ENCODE measurements at regions of chr3 and their contacts with region 1.

Region 1: DNA sequence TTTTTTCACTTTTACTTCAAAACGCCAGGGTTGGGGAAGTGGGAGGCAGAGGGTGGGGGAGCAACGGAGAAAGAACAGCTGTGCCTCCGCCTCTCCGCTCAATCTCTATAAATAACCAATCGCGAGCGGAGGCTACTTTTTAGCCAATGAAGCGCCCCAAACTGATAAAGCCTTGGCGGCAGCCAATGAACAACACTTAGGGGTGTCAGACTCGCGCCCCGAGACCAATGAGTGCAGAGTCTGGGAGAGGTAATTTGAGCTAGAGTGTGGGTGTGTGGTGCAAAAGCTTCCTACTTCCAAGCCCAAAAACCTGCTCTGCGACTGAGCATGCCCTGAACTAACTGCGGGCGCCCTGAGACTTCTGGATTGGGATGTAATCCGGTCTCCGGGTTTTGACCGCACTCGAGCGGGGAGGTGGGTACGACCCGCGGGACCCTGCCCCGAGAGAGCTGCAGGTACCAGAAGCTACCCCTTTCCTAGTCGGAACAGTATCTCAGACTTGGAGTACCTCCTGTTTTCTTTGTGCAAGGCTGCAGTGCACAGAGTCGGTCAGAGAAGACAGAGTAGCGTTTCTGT is 800 bp upstream of the RAP2B start:
- DNase-seq: peak; percentile 99
- H3K4me3 ChIP-seq: peak overlapping the region; percentile 88 to 100 (median 94)
- H3K27ac ChIP-seq: peak overlapping the region; percentile 84
- H3K4me1 ChIP-seq: peaks cover 18% of the 10 kb centered on the region
- H3K27me3 ChIP-seq: no peaks in the 10 kb centered on the region
- CTCF ChIP-seq: no peak
- POLR2A ChIP-seq: no peak

Region 2: DNA sequence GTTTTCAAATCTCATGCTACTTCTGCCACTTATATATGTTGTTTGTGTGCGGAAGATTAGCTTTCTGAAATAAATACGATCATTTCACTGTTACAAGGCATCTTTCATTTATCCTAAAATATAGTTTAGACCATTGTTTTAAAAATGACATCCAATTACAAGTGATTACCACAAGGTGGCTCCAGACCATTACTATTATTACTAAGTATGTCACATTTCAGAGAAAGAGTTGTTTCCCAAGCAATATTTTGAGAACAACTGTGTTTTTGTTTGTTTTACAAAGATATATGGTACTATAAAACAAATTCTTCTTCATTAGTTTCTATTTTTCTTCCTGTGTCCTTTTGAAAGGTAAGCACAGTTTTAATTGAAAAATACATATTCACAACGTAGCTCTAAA is 135.2 kb before region 1 on chr3:
- CTCF ChIA-PET with region 1: interaction called, 6 read pairs
- POLR2A ChIA-PET with region 1: no interaction called
- dilution Hi-C with region 1: no loop called
- intact Hi-C with region 1: loop called (anchors 1 kb)
- DNase-seq: peak; percentile 53
- H3K4me3 ChIP-seq: no peak overlapping the region
- H3K27ac ChIP-seq: no peak overlapping the region
- H3K4me1 ChIP-seq: peaks cover 8% of the 10 kb centered on the region
- H3K27me3 ChIP-seq: peaks cover 0 to 6% of the 10 kb centered on the region in 2 experiments
- CTCF ChIP-seq: peak; percentile 28 to 35
- POLR2A ChIP-seq: no peak

Region 3: GRCh38 chr3:153138276-153139210 is 22.7 kb before region 1 on chr3:
- CTCF ChIA-PET with region 1: interaction called, 17 read pairs
- POLR2A ChIA-PET with region 1: interaction called, 3 read pairs
- dilution Hi-C with region 1: no loop called
- intact Hi-C with region 1: loop called (anchors 1 kb)
- DNase-seq: peak; percentile 97
- H3K4me3 ChIP-seq: no peak overlapping the region
- H3K27ac ChIP-seq: peak overlapping the region; percentile 97
- H3K4me1 ChIP-seq: peaks cover 30% of the 10 kb centered on the region
- H3K27me3 ChIP-seq: no peaks in the 10 kb centered on the region
- CTCF ChIP-seq: no peak
- POLR2A ChIP-seq: peak; percentile 49

Region 4: GRCh38 chr3:153252963-153253362 is 91.7 kb after region 1 on chr3:
- CTCF ChIA-PET with region 1: interaction called, 3 read pairs
- POLR2A ChIA-PET with region 1: no interaction called
- dilution Hi-C with region 1: no loop called
- intact Hi-C with region 1: loop called (anchors 1 kb)
- DNase-seq: no peak
- H3K4me3 ChIP-seq: no peak overlapping the region
- H3K27ac ChIP-seq: no peak overlapping the region
- H3K4me1 ChIP-seq: peaks cover 21% of the 10 kb centered on the region
- H3K27me3 ChIP-seq: no peaks in the 10 kb centered on the region
- CTCF ChIP-seq: no peak
- POLR2A ChIP-seq: no peak

Region 5: DNA sequence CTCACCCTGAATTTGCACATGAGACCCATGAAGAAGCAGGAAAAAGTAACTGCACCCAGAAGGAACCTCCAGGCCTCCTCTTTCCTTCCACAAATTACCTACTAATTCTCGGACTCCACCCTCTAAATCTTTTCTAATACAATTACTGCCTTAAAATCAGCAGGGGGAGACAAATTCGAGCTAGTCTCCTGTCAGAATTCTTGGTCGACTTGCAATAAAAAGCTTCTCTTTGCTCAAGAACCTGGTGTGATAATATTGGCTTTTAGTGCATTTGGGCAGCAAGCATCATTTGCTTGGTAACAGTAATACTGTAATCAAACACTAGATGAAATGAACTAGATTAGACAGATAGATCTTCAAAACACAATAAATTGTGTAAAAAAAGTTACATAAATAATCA is 282.7 kb after region 1 on chr3:
- CTCF ChIA-PET with region 1: interaction called, 6 read pairs
- POLR2A ChIA-PET with region 1: no interaction called
- dilution Hi-C with region 1: no loop called
- intact Hi-C with region 1: loop called (anchors 2 kb)
- DNase-seq: peak; percentile 18
- H3K4me3 ChIP-seq: no peak overlapping the region
- H3K27ac ChIP-seq: no peak overlapping the region
- H3K4me1 ChIP-seq: no peaks in the 10 kb centered on the region
- H3K27me3 ChIP-seq: no peaks in the 10 kb centered on the region
- CTCF ChIP-seq: peak; percentile 1 to 6
- POLR2A ChIP-seq: no peak

Region 6: GRCh38 chr3:153768561-153769469 is 607.6 kb after region 1 on chr3:
- CTCF ChIA-PET with region 1: interaction called, 6 read pairs
- POLR2A ChIA-PET with region 1: no interaction called
- dilution Hi-C with region 1: no loop called
- intact Hi-C with region 1: loop called (anchors 1 kb)
- DNase-seq: peak; percentile 57
- H3K4me3 ChIP-seq: no peak overlapping the region
- H3K27ac ChIP-seq: no peak overlapping the region
- H3K4me1 ChIP-seq: no peaks in the 10 kb centered on the region
- H3K27me3 ChIP-seq: no peaks in the 10 kb centered on the region
- CTCF ChIP-seq: peak; percentile 78
- POLR2A ChIP-seq: no peak

Region 7: GRCh38 chr3:153927107-153927506 is 765.9 kb after region 1 on chr3:
- CTCF ChIA-PET with region 1: interaction called, 4 read pairs
- POLR2A ChIA-PET with region 1: no interaction called
- dilution Hi-C with region 1: no loop called
- intact Hi-C with region 1: loop called (anchors 2 kb)
- DNase-seq: peak; percentile 50
- H3K4me3 ChIP-seq: no peak overlapping the region
- H3K27ac ChIP-seq: no peak overlapping the region
- H3K4me1 ChIP-seq: no peaks in the 10 kb centered on the region
- H3K27me3 ChIP-seq: no peaks in the 10 kb centered on the region
- CTCF ChIP-seq: no peak
- POLR2A ChIP-seq: no peak

Measured in endothelial cell of umbilical vein (primary cell).